Activated CD4-positive, alpha-beta T cell treated with anti-CD3 and anti-CD28 coated beads, Interleukin-2, amount 10 ng/mL, durations not matched to agents 24 days and 14 days (primary cell): ENCODE measurements at regions of chr11 and their contacts with region 1.

Region 1: DNA sequence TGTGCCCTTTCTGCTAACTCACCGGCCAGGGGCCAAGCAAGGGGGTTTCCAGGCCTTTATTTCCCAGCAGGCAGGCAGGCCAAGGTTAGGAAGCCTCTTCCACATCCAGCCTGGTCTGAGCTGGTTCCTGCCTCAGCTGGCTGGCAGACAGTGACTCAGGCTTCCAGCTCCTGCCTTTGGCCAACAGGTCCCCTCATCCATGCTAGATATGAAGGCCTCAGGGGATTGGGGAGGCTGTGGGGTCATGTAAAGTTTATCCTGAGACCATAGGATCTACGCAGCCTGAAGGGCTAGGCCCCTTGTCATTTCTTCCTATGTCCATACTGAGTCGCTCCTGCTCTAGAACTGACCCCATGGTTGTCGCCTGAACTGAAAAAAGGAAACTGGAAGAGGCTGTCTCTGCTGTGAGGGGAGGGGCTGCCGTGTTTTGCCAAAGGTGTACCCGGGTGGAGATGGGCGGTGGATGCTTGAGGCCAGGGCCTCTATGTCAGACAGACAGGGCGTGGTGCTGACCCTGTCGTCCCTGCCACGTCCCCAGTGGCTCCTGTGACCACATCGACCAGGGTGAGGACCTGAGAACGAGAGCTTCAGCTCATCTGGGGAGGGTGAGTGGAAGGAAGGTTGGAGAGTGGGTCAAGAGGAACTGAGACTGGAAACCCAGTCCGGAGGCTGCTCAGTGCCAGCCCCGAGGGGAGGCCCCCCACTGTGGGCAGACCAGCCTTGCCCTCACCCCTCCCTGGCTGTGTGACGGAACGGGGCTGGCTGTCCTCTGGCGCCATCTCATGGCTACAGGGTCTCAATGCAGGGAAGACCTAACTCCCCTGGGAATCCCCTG is 17.0 kb downstream of the P2RY6 start:
- DNase-seq: peak; percentile 86
- H3K4me3 Mint-ChIP-seq: peak overlapping the region; percentile 34
- H3K27ac Mint-ChIP-seq: peak overlapping the region; percentile 37
- H3K4me1 Mint-ChIP-seq: peaks cover 20% of the 10 kb centered on the region
- H3K27me3 Mint-ChIP-seq: peaks cover 7% of the 10 kb centered on the region

Region 2: GRCh38 chr11:73114110-73114824 is 174.8 kb before region 1 on chr11:
- intact Hi-C with region 1: no loop called
- DNase-seq: no peak
- H3K4me3 Mint-ChIP-seq: no peak overlapping the region
- H3K27ac Mint-ChIP-seq: no peak overlapping the region
- H3K4me1 Mint-ChIP-seq: no peaks in the 10 kb centered on the region
- H3K27me3 Mint-ChIP-seq: no peaks in the 10 kb centered on the region

Region 3: DNA sequence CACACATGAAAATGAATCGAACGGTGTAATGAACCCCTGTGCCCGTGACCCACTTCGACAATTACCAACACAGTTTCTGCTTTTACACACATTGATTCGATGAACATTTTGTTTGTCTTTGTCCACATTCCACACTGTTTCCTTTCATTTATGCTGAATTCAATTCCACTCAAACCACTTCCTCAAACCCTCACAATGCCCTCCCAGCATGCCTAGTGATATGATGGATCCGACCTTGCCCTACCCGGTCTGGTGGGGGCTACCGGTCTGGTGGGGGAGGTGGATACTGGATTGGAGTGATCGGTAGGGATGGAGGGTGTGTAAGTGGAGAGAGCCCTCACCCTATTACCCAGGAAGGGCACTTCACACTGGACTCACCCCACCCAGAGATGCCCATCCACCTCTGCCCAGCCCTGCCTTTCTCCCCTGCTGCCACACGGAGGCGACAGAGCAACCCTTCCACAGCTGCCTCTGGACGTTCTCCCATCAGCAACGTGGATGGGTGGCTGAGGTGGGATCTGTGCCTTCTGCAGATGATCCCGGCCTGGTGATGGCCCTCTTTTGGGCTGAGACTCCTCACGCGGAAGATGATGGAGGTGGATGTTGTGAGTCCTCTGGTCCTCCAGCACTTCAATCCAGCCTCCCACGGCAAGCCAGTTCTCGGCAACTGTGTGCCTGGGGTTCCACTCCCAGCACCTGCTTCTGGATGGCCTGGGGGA is 104.0 kb before region 1 on chr11:
- intact Hi-C with region 1: loop called (anchors 1 kb)
- DNase-seq: peak; percentile 86
- H3K4me3 Mint-ChIP-seq: peak overlapping the region; percentile 52
- H3K27ac Mint-ChIP-seq: no peak overlapping the region
- H3K4me1 Mint-ChIP-seq: peaks cover 8% of the 10 kb centered on the region
- H3K27me3 Mint-ChIP-seq: peaks cover 25% of the 10 kb centered on the region

Region 4: DNA sequence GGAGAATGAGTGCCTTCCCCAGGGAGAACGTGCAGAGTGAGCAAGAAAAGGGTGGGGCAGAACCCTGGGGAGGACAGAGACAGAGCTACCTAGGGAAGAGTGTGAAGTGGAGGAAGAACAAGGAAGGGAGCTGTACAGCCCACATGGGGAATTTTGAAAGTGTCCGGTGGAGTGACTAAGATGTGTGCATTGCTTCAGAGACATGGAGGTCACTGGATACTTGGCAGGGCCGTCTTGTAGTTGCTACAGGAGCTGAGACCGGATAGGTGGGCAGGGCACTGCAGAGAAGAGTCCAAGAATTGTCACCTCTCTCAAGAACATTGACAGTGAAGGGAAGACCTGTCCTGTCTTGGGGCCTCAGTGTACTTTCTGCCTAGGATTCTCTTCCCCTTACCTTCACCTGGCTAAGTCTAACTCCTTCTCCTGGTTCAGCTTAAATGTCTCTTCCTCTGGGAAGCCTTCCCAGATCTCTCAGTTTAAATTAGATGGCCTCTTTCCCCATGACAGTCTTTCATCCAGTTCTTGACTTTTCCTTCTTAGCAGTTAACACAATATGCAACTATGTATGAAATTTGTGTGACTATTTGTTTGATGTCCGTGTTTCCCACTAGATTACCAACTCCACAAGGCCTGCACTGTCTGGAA is 26.1 kb before region 1 on chr11:
- intact Hi-C with region 1: no loop called
- DNase-seq: no peak
- H3K4me3 Mint-ChIP-seq: no peak overlapping the region
- H3K27ac Mint-ChIP-seq: no peak overlapping the region
- H3K4me1 Mint-ChIP-seq: no peaks in the 10 kb centered on the region
- H3K27me3 Mint-ChIP-seq: peaks cover 47% of the 10 kb centered on the region

Region 5: GRCh38 chr11:73414977-73415651 is 126.0 kb after region 1 on chr11:
- intact Hi-C with region 1: no loop called
- DNase-seq: no peak
- H3K4me3 Mint-ChIP-seq: no peak overlapping the region
- H3K27ac Mint-ChIP-seq: peak overlapping the region; percentile 59
- H3K4me1 Mint-ChIP-seq: peaks cover 8% of the 10 kb centered on the region
- H3K27me3 Mint-ChIP-seq: no peaks in the 10 kb centered on the region